ENCODE measurements at regions of chr7 and their contacts with region 1.

Region 1: DNA sequence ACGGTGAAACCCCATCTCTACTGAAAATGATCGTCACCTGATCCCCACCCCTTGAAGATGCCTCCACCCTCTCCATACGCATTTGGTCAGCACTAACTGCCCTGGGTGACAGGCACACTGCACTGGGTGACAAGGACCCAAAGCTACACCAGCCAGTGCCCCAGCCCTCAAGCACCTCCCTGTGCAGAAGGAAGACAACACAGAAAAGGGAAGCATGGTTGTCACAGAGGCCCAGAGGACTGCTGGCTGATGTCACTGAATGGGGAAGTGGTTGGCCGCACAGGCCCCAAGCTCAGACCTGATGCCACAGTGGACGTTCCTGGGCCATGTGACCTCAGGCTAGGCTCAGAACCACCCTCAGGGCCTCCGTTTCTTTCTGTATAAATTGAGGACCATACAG is 4.2 kb upstream of the PILRA start:
- DNase-seq: peak; percentile 90
- ATAC-seq: peak; percentile 74
- H3K4me3 ChIP-seq: no peak overlapping the region
- H3K27ac ChIP-seq: peak overlapping the region; percentile 93
- H3K4me1 ChIP-seq: peaks cover 70% of the 10 kb centered on the region
- H3K27me3 ChIP-seq: no peaks in the 10 kb centered on the region
- CTCF ChIP-seq: no peak
- EP300 ChIP-seq: peak; percentile 81 to 87
- POLR2A ChIP-seq: peak; percentile 77
- RAD21 ChIP-seq: no peak

Region 2: DNA sequence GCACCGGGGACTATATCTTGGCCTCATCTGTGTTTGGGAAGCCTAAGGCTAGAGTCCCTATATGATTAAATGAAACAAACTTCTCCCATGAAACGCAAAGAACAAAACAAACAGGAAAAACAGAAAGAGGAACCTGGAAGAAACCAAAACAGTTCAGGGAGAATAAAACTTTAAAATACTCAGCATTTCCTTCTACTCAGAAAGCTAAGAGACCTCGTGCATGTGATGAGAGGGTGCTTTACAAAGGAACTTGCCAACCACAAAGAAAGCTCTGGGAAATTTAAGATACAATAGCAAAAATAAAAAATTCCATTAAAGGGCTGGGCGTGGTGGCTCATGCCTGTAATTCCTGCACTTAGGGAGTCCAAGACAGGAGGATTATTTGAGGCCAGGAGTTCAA is 11.1 kb after region 1 on chr7:
- CTCF ChIA-PET with region 1: interaction called, 8 read pairs
- POLR2A ChIA-PET with region 1: interaction called, 30 read pairs
- RAD21 ChIA-PET with region 1: interaction called, 20 read pairs
- SMC1A ChIA-PET with region 1: interaction called, 16 read pairs
- in situ Hi-C with region 1: no loop called
- intact Hi-C with region 1: no loop called
- DNase-seq: no peak
- ATAC-seq: no peak
- H3K4me3 ChIP-seq: no peak overlapping the region; the same call in 1 of the 2 replicates
- H3K27ac ChIP-seq: no peak overlapping the region
- H3K4me1 ChIP-seq: peaks cover 8% of the 10 kb centered on the region
- H3K27me3 ChIP-seq: no peaks in the 10 kb centered on the region
- CTCF ChIP-seq: no peak
- EP300 ChIP-seq: no peak
- POLR2A ChIP-seq: no peak
- RAD21 ChIP-seq: no peak

Region 3: DNA sequence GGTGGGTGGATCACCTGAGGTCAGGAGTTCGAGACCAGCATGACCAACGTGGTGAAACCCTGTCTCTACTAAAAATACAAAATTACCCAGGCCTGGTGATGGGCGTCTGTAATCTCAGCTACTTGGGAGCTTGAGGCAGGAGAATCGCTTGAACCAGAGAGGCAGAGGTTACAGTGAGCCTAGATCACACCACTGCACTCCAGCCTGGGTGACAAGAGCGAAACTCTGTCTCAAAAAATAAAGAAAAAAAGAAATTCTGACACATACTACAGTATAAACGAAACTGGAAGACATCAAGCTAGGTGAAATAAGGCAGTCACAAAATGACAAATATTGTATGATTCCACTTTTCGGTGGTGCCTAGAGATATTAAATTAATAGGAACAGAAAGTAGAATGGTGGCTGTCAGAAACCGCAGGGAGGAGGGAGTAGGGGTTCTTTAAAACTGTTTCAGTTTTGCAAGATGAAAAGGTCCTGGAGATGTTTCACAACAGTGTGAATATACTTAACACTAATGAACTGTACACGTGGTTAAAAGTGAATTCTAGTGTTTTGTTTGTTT is 27.4 kb after region 1 on chr7:
- CTCF ChIA-PET with region 1: interaction called, 7 read pairs
- POLR2A ChIA-PET with region 1: interaction called, 11 read pairs
- RAD21 ChIA-PET with region 1: interaction called, 27 read pairs
- SMC1A ChIA-PET with region 1: interaction called, 27 read pairs
- in situ Hi-C with region 1: no loop called
- intact Hi-C with region 1: loop called (anchors 1 kb)
- DNase-seq: peak; percentile 93
- ATAC-seq: peak; percentile 92
- H3K4me3 ChIP-seq: peak overlapping the region; percentile 43; the same call in 1 of the 2 replicates
- H3K27ac ChIP-seq: peak overlapping the region; percentile 72
- H3K4me1 ChIP-seq: peaks cover 33% of the 10 kb centered on the region
- H3K27me3 ChIP-seq: no peaks in the 10 kb centered on the region
- CTCF ChIP-seq: no peak
- EP300 ChIP-seq: peak; percentile 63 to 92; a peak in 2 of 4 replicates
- POLR2A ChIP-seq: no peak
- RAD21 ChIP-seq: no peak

Region 4: DNA sequence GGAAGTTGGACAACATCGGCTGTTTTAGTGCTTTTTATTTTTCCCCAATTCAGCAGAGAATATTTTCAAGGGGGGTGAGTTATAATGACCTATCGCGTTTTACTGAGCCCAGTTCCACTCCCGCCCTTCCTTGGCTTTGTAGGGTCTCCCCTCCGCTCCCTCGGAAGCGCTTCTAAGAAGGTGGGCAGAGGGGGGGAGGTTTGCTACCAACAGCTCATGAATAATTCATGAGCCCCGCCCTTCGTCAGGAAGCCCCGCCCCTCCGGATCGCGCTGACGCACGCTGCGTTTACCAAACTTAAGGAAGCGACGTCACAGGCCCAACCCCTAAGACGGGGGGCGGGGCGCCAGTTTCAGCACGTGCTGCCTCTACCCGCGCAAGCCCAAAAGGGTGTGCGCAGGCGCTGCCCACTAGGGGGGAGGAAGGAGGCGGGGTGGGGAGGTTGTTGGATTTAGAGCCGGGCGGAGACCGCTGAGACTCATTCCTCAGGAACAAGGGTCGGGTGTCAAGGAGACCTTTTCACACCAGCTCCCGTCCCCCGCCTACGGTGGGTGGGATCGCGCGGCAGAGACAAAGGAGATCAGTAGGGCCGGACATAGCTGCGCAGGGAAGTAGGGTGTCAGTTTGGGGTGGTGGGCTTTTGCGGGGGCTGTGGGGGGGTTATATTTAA is 60.0 kb after region 1 on chr7:
- CTCF ChIA-PET with region 1: interaction called, 8 read pairs
- POLR2A ChIA-PET with region 1: interaction called, 15 read pairs
- RAD21 ChIA-PET with region 1: interaction called, 25 read pairs
- SMC1A ChIA-PET with region 1: interaction called, 9 read pairs
- in situ Hi-C with region 1: no loop called
- intact Hi-C with region 1: no loop called
- DNase-seq: peak; percentile 96
- ATAC-seq: peak; percentile 68
- H3K4me3 ChIP-seq: peak overlapping the region; percentile 74
- H3K27ac ChIP-seq: peak overlapping the region; percentile 99
- H3K4me1 ChIP-seq: peaks cover 28% of the 10 kb centered on the region
- H3K27me3 ChIP-seq: no peaks in the 10 kb centered on the region
- CTCF ChIP-seq: no peak
- EP300 ChIP-seq: peak in 1 of 2 experiments; percentile 72; a peak in 2 of 4 replicates
- POLR2A ChIP-seq: peak; percentile 89
- RAD21 ChIP-seq: no peak

Region 5: GRCh38 chr7:100478966-100479665 is 110.0 kb after region 1 on chr7 and contains the start of gene TSC22D4:
- CTCF ChIA-PET with region 1: interaction called, 10 read pairs
- POLR2A ChIA-PET with region 1: interaction called, 4 read pairs
- RAD21 ChIA-PET with region 1: interaction called, 7 read pairs
- SMC1A ChIA-PET with region 1: no interaction called
- in situ Hi-C with region 1: no loop called
- intact Hi-C with region 1: no loop called
- DNase-seq: peak; percentile 79
- ATAC-seq: peak; percentile 85
- H3K4me3 ChIP-seq: peak within 1 kb of the TSS; percentile 99
- H3K27ac ChIP-seq: peak within 1 kb of the TSS; percentile 89
- H3K4me1 ChIP-seq: peaks cover 27% of the 10 kb centered on the region
- H3K27me3 ChIP-seq: no peaks in the 10 kb centered on the region
- CTCF ChIP-seq: no peak
- EP300 ChIP-seq: no peak
- POLR2A ChIP-seq: peak; percentile 87
- RAD21 ChIP-seq: no peak
- polyA plus RNA-seq, gene TSC22D4: 0.50 to 1.2 TPM